Activated CD4-positive, alpha-beta memory T cell treated with anti-CD3 and anti-CD28 coated beads for 36 hours (primary cell): ENCODE measurements at regions of chr14 and their contacts with region 1.

Region 1: GRCh38 chr14:36373982-36374673 is 53.7 kb upstream of the MBIP start:
- DNase-seq: peak; percentile 80
- H3K4me3 Mint-ChIP-seq: no peak overlapping the region
- H3K27ac Mint-ChIP-seq: no peak overlapping the region
- H3K4me1 Mint-ChIP-seq: no peaks in the 10 kb centered on the region
- H3K27me3 Mint-ChIP-seq: no peaks in the 10 kb centered on the region

Region 2: GRCh38 chr14:36070031-36070719 is 304.0 kb before region 1 on chr14:
- CTCF ChIA-PET with region 1: interaction called, 56 read pairs
- POLR2A ChIA-PET with region 1: no interaction called
- intact Hi-C with region 1: loop called (anchors 1 kb)
- DNase-seq: peak; percentile 63
- H3K4me3 Mint-ChIP-seq: no peak overlapping the region
- H3K27ac Mint-ChIP-seq: no peak overlapping the region
- H3K4me1 Mint-ChIP-seq: peaks cover 2% of the 10 kb centered on the region
- H3K27me3 Mint-ChIP-seq: peaks cover 14% of the 10 kb centered on the region

Region 3: DNA sequence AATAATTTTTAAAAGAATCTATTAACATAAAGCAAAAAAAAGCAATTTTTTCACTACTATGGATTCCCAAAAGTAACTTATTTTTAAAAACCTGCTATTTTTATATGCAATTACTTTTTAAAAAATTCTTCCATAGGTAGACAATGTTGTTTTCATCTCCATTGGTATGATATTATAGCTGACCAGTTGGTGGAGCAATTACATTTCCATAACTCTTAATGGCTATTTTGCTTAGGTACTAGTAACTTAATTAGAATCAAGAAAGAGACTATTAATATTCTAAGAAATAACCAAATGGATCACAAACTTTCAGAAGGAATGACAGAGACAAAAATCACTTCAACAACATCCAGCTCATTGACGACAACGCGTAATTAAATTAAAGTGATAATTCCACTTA is 132.9 kb before region 1 on chr14:
- CTCF ChIA-PET with region 1: interaction called, 13 read pairs
- POLR2A ChIA-PET with region 1: no interaction called
- intact Hi-C with region 1: loop called (anchors 1 kb)
- DNase-seq: no peak
- H3K4me3 Mint-ChIP-seq: no peak overlapping the region
- H3K27ac Mint-ChIP-seq: no peak overlapping the region
- H3K4me1 Mint-ChIP-seq: peaks cover 5% of the 10 kb centered on the region
- H3K27me3 Mint-ChIP-seq: peaks cover 12% of the 10 kb centered on the region

Region 4: DNA sequence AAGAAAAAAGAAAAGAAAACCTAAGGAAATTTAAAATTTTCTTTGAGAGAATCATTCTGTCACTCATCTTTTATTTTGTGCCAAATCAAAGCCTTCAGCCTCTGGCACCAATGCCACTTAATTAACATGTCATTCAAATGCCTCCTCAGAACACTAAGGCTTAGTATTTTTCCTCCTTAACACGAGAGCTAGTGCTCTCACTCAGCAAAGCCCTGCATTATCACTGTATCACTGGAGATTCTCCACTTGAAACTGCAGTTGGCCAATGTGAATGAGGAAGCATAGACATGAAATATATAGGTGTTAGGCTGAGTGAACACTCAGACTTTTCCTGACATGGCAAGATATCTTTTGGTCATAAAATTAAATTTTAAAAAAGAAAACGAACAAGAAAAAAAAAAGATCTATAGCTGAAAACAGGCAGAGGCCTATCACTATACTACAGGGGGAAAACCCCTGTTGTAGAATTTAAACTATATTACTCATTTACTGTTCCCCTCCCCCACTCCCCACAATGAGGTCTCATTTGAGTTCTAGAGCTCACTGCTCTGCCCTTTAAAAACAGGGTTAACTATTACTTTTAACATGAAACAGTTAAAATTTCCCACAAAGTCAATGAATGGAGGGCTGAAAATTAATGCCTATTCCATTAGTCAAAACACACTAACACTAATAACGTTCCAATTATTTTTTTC is 58.8 kb before region 1 on chr14:
- CTCF ChIA-PET with region 1: interaction called, 9 read pairs
- POLR2A ChIA-PET with region 1: no interaction called
- intact Hi-C with region 1: loop called (anchors 5 kb)
- DNase-seq: peak; percentile 49
- H3K4me3 Mint-ChIP-seq: peak overlapping the region; percentile 50
- H3K27ac Mint-ChIP-seq: peak overlapping the region; percentile 79
- H3K4me1 Mint-ChIP-seq: peaks cover 38% of the 10 kb centered on the region
- H3K27me3 Mint-ChIP-seq: no peaks in the 10 kb centered on the region

Region 5: DNA sequence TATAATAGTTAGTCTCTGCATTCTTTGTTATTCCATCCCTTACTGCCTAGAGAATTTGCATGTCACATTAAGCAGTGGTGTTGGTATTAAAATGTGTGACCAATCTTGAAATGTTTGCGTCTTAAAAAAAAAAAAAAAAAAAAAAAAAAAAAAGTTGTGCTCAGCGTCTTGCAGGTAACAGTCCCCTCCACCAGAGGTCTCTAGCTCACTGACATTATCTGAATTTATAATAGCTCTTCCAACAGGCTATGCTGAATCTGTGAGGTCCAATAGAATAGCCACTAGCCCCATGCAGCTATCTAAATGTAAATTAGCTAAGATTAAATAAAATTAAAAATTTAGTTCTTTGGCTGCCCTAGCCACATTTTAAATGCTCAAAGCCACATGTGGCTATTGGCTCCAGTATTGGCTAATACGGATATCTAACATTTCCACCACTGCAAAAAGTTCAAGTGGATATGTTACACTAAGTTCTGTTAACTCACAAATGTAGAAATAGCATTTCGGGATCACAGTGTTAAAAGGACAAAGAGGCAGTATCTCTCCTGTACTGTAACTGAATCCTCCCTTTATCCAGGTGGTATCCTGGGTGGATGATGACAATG is 179.6 kb after region 1 on chr14:
- CTCF ChIA-PET with region 1: no interaction called
- POLR2A ChIA-PET with region 1: no interaction called
- intact Hi-C with region 1: loop called (anchors 2 kb)
- DNase-seq: no peak
- H3K4me3 Mint-ChIP-seq: no peak overlapping the region
- H3K27ac Mint-ChIP-seq: no peak overlapping the region
- H3K4me1 Mint-ChIP-seq: no peaks in the 10 kb centered on the region
- H3K27me3 Mint-ChIP-seq: peaks cover 8% of the 10 kb centered on the region